ENCODE measurements at regions of chr13 and their contacts with region 1.

Region 1: DNA sequence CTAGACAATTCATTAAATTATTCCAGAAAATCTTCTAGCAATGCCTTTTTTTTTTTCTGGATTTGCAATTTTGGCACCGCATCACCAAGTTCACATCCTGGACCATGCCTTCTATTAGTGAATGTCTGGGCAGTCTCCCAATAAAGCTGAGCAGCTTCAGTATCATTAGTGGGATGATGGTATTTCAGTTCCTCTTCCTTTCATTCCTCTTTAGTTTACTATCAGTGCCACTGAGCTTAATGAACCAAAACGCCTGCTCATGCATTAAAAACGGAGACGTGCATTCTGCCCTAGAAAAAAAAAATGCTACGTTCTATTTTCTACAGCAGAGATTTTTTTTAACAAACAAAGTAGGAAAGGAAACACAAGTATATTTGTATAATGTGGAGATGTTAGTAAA is 343.0 kb downstream of the PCDH9 start:
- DNase-seq: peak; percentile 89
- H3K4me3 ChIP-seq: peak overlapping the region; percentile 50
- H3K27ac ChIP-seq: peak overlapping the region; percentile 99
- H3K4me1 ChIP-seq: peaks cover 67% of the 10 kb centered on the region
- CTCF ChIP-seq: no peak

Region 2: GRCh38 chr13:66612983-66613382 is 274.1 kb before region 1 on chr13:
- CTCF ChIA-PET with region 1: no interaction called
- POLR2A ChIA-PET with region 1: no interaction called
- intact Hi-C with region 1: no loop called
- DNase-seq: no peak
- H3K4me3 ChIP-seq: no peak overlapping the region
- H3K27ac ChIP-seq: no peak overlapping the region
- H3K4me1 ChIP-seq: no peaks in the 10 kb centered on the region
- CTCF ChIP-seq: no peak

Region 3: DNA sequence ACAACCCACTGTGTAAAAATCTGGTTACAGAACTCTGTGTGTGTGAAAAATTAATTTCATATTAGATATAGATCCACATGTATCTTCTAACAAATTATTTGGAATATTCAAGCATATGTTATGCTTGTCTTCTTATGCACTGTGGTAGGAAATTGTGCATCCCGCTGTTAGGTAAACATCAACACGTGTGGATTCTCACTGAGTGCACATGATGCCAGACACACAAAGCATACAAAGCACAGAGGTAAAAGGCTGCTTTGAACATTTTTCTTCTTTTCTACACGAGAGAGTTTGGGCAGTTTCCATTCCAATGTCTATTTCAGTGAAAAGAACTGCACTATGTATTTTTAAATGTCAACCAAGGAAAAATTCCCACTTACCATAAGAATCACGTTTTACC is 11.8 kb before region 1 on chr13:
- CTCF ChIA-PET with region 1: no interaction called
- POLR2A ChIA-PET with region 1: interaction called, 11 read pairs
- intact Hi-C with region 1: no loop called
- DNase-seq: no peak
- H3K4me3 ChIP-seq: no peak overlapping the region
- H3K27ac ChIP-seq: no peak overlapping the region
- H3K4me1 ChIP-seq: peaks cover 10% of the 10 kb centered on the region
- CTCF ChIP-seq: no peak

Region 4: DNA sequence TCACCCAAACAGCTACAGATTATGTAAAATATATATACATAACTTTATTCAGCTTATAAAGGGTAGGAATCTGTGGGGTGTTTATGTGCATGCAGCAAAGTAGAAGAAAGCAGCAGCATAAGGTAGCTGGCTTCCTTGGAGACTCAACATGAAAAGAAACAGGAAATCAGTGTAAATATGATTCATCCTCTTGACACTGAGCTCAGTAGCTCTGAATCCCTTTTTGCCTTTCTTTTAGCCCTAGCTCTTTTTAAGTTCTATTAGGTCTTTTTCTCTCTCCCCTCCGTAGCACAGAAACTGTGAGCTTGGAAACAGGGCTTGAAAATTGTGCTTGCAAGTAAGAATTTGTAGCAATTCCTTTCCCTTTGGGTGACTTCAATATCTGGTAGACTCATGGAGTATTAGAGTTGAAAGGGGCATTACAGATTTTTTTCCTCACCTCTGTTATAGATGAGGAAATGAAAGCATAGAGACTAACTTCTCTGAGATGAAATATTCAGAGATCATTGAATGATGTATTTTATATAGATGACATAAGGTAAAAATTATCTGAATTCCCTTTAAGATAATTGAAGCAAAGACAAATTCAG is 28.6 kb after region 1 on chr13:
- CTCF ChIA-PET with region 1: no interaction called
- POLR2A ChIA-PET with region 1: interaction called, 16 read pairs
- intact Hi-C with region 1: no loop called
- DNase-seq: peak; percentile 27
- H3K4me3 ChIP-seq: no peak overlapping the region
- H3K27ac ChIP-seq: no peak overlapping the region
- H3K4me1 ChIP-seq: peaks cover 8% of the 10 kb centered on the region
- CTCF ChIP-seq: no peak

Region 5: DNA sequence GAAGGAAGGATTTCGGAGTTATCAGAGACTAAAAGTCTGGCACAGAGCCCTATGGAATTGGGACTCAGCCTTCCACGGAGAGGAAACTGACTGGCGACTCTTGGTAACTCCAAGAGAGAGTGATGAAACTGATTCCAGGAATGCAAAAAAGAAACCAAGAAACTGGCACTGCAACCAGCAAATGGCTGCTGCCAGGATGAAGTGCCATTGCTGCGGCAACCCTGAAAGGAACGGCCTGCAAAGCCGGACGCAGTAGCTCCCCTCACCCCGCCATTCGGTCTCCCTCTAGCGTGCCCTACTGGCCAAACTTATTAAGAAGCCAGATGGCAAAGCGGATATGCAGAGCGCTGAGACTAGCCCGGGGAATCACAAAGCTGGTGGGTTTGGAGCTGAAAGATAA is 107.0 kb after region 1 on chr13:
- CTCF ChIA-PET with region 1: interaction called, 9 read pairs
- POLR2A ChIA-PET with region 1: interaction called, 57 read pairs
- intact Hi-C with region 1: loop called (anchors 1 kb)
- DNase-seq: peak; percentile 90
- H3K4me3 ChIP-seq: peak overlapping the region; percentile 49
- H3K27ac ChIP-seq: peak overlapping the region; percentile 99
- H3K4me1 ChIP-seq: peaks cover 70% of the 10 kb centered on the region
- CTCF ChIP-seq: peak; percentile 81

Measured in OCI-LY7 (cell line).